ENCODE measurements at regions of chr6 and their contacts with region 1.

Region 1: GRCh38 chr6:31827286-31828079 is at the start of gene HSPA1B:
- DNase-seq: peak; percentile 55 to 96 (median 82)
- ATAC-seq: peak; percentile 80
- H3K4me3 ChIP-seq: peak within 1 kb of the TSS; percentile 74
- H3K4me3 Mint-ChIP-seq: peak within 1 kb of the TSS; percentile 85 to 97 (median 90)
- H3K27ac ChIP-seq: peak within 1 kb of the TSS; percentile 72
- H3K27ac Mint-ChIP-seq: peak within 1 kb of the TSS; percentile 93 to 99 (median 97)
- H3K4me1 ChIP-seq: peaks cover 12 to 17% of the 10 kb centered on the region in 2 donors
- H3K4me1 Mint-ChIP-seq: peaks cover 11 to 51% (median 46%) of the 10 kb centered on the region in 7 donors
- H3K27me3 ChIP-seq: no peaks in the 10 kb centered on the region
- H3K27me3 Mint-ChIP-seq: no peaks in the 10 kb centered on the region
- total RNA-seq, gene HSPA1B: 8.6 to 68.9 (median 28.9) TPM

Region 2: DNA sequence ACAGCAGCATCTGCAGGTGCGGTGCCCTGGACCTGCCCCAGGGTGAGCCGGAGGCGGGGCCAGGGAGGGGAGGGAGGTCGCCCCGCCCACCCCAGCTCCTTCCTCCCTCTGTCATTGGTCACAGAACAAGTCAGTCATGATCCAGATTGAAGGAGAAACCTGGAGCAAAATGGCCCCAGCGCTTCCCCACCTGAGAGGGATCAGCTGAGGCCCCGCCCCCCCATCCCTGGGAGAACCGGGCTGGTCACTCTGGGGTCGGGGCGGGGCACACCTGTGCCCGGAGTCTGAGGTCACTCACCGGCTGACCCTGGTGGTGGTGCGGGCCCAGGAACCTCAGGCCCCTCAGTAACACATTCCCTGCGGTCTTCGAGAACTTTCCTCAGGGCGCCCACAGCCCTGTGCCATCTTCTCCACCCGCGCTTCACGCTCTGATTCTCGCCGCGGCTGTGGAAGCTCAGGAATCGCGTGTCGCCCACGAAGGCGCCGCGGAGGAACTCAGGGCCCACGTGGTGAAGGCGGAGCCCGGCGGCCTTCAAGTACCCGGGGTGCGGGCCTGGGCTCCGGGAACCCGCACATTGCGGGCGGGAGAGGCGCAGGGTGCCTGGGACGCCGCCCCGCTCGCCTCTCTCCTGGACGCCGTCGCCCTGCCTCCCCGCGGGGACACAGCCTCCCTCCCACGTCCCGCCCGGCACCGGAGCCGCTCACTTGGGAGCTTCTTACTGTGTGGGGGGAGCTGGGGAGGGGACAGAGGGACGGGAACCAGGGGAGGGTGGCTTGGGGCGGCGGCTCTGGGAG is 519.2 kb before region 1 on chr6:
- CTCF ChIA-PET with region 1: no interaction called
- POLR2A ChIA-PET with region 1: no interaction called
- intact Hi-C with region 1: no loop called
- DNase-seq: peak; percentile 24 to 84 (median 68)
- ATAC-seq: peak; percentile 96
- H3K4me3 ChIP-seq: peak overlapping the region; percentile 71
- H3K4me3 Mint-ChIP-seq: peak overlapping the region; percentile 72 to 93 (median 88)
- H3K27ac ChIP-seq: peak overlapping the region; percentile 61
- H3K27ac Mint-ChIP-seq: peak overlapping the region in 7 of 9 donors; percentile 65 to 93 (median 82)
- H3K4me1 ChIP-seq: peaks cover 0 to 5% of the 10 kb centered on the region in 2 donors
- H3K4me1 Mint-ChIP-seq: peaks cover 0 to 13% (median 0%) of the 10 kb centered on the region in 7 donors
- H3K27me3 ChIP-seq: peaks cover 0 to 3% of the 10 kb centered on the region in 2 donors
- H3K27me3 Mint-ChIP-seq: peaks cover 0 to 50% (median 0%) of the 10 kb centered on the region in 5 donors

Region 3: DNA sequence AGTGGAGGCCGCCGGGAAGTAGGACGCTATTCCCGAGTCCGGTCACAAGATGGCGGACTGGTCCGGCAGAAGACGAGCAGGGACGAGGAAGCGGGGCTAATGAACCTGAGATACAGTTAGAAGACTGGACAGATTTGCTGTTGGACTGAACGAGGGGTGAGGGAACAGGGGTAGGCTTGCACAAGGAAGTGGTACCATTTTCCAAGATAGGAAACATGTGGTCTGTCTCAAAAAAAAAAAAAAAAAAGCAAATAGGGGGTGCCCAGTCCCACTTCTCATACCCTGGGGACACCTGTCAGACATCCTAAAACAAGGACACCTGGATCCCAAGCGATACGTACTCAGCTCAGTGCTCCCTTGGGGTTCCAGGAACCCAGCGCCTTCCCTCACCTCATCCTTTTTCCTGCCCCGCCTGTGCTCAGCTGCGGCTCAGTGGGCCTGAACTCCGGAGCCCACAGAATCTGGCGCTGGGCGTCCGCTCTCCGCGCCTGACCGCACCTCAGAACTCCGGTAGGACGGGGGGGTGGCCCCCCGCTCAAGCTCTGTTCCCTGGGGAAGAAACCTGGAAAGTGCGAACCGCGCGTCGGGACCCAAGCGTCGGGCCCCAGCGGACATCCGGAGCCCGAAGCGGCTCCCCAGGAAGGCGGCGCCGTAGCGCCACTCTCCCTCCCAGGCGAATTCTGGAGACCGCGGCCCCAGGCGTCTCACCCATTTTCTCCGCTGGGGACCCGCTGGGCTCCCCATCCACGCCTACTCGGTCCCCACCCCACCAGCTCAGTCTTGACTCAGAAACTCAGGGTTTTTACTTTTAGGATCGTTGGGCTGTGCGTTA is 146.4 kb before region 1 on chr6 and contains the start of gene LY6G5C:
- CTCF ChIA-PET with region 1: interaction called, 12 read pairs
- POLR2A ChIA-PET with region 1: interaction called, 12 read pairs
- intact Hi-C with region 1: loop called (anchors 1 kb)
- DNase-seq: peak in 8 of 9 donors; percentile 28 to 65 (median 48)
- ATAC-seq: peak; percentile 80
- H3K4me3 ChIP-seq: peak within 1 kb of the TSS; percentile 78
- H3K4me3 Mint-ChIP-seq: peak within 1 kb of the TSS; percentile 86 to 98 (median 90)
- H3K27ac ChIP-seq: peak within 1 kb of the TSS; percentile 68
- H3K27ac Mint-ChIP-seq: peak within 1 kb of the TSS; percentile 60 to 86 (median 68)
- H3K4me1 ChIP-seq: peaks cover 15 to 16% of the 10 kb centered on the region in 2 donors
- H3K4me1 Mint-ChIP-seq: peaks cover 14 to 32% (median 19%) of the 10 kb centered on the region in 7 donors
- H3K27me3 ChIP-seq: no peaks in the 10 kb centered on the region
- H3K27me3 Mint-ChIP-seq: no peaks in the 10 kb centered on the region
- total RNA-seq, gene LY6G5C: 2.4 to 4.3 (median 3.1) TPM

Region 4: DNA sequence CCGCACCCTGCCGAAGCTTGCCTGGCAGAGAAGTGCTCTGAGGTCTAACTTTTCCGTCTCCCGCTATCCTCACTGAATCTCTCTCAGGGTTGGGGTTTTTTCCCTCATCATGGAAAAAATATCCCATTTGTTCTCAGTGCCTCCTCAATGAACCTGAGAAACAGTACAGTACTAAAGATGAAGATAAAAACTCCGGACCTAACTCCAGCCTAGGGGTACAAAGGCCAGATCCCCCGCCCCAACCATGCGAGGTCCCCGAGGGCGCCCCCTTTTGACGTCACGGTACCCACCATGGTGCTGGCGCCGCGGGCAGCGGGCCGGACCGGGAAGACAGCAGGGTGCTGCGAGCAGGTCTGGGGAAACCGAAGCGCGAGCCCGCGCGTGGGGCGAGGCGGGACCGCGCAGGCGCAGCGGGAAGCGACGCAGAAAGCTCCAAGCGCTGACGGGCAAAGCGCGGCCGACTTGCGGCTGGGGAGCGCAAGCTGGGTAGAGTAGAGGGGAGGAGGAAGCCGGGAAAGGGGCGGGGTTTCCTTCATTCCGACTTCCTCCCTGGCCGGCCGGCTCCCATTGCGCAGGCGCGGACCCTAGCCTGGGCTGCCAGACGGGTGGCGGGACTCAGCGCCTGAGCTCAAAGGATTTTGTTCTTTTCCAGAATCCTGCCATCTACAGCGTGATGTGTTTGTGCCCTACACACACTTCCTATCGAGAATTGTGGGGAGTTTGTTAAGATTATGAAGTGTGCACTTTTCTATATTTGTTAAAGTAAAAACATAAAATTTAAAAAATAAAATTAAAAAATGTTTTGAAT is 20.8 kb before region 1 on chr6 and contains the start of gene LSM2:
- CTCF ChIA-PET with region 1: interaction called, 3 read pairs
- POLR2A ChIA-PET with region 1: interaction called, 29 read pairs
- intact Hi-C with region 1: no loop called
- DNase-seq: peak; percentile 96 to 98 (median 98)
- ATAC-seq: peak; percentile 100
- H3K4me3 ChIP-seq: peak within 1 kb of the TSS; percentile 92
- H3K4me3 Mint-ChIP-seq: peak within 1 kb of the TSS; percentile 86 to 95 (median 92)
- H3K27ac ChIP-seq: peak within 1 kb of the TSS; percentile 89
- H3K27ac Mint-ChIP-seq: peak within 1 kb of the TSS; percentile 88 to 97 (median 93)
- H3K4me1 ChIP-seq: peaks cover 9 to 14% of the 10 kb centered on the region in 2 donors
- H3K4me1 Mint-ChIP-seq: peaks cover 16 to 47% (median 30%) of the 10 kb centered on the region in 7 donors
- H3K27me3 ChIP-seq: no peaks in the 10 kb centered on the region
- H3K27me3 Mint-ChIP-seq: no peaks in the 10 kb centered on the region
- total RNA-seq, gene LSM2: 22.9 to 94.5 (median 29.2) TPM

Region 5: GRCh38 chr6:31815025-31815838 is 12.3 kb before region 1 on chr6 and contains the starts of genes HSPA1A and HSPA1L:
- CTCF ChIA-PET with region 1: interaction called, 4 read pairs
- POLR2A ChIA-PET with region 1: interaction called, 24 read pairs
- intact Hi-C with region 1: loop called in 1 of 2 experiments (anchors 2 kb)
- DNase-seq: peak in 6 of 9 donors; percentile 32 to 81 (median 42)
- ATAC-seq: peak; percentile 43
- H3K4me3 ChIP-seq: peak within 1 kb of the TSS; percentile 68
- H3K4me3 Mint-ChIP-seq: peak within 1 kb of the TSS; percentile 85 to 96 (median 94)
- H3K27ac ChIP-seq: peak within 1 kb of the TSS; percentile 78
- H3K27ac Mint-ChIP-seq: peak within 1 kb of the TSS; percentile 86 to 93 (median 90)
- H3K4me1 ChIP-seq: peaks cover 21 to 30% of the 10 kb centered on the region in 2 donors
- H3K4me1 Mint-ChIP-seq: peaks cover 7 to 44% (median 39%) of the 10 kb centered on the region in 7 donors
- H3K27me3 ChIP-seq: no peaks in the 10 kb centered on the region
- H3K27me3 Mint-ChIP-seq: no peaks in the 10 kb centered on the region
- total RNA-seq, gene HSPA1A: 6.7 to 125 (median 30.3) TPM
- total RNA-seq, gene HSPA1L: 3.3 to 5.5 (median 4.7) TPM

Measured in naive thymus-derived CD4-positive, alpha-beta T cell (primary cell).